ENCODE measurements at regions of chr5 and their contacts with region 1.

Region 1: GRCh38 chr5:146049014-146049703 is 56.2 kb downstream of the PLAC8L1 start:
- DNase-seq: peak in 1 of 2 donors; percentile 67
- H3K4me3 ChIP-seq: no peak overlapping the region
- H3K27ac ChIP-seq: no peak overlapping the region
- H3K4me1 ChIP-seq: no peaks in the 10 kb centered on the region
- H3K27me3 ChIP-seq: no peaks in the 10 kb centered on the region
- CTCF ChIP-seq: peak; percentile 40 to 76 (median 67)

Region 2: GRCh38 chr5:144203750-144204596 is 1845.2 kb before region 1 on chr5:
- intact Hi-C with region 1: loop called (anchors 10 kb)
- DNase-seq: peak in 1 of 2 donors; percentile 64
- H3K4me3 ChIP-seq: no peak overlapping the region
- H3K27ac ChIP-seq: no peak overlapping the region
- H3K4me1 ChIP-seq: peaks cover 0 to 4% of the 10 kb centered on the region in 2 donors
- H3K27me3 ChIP-seq: no peaks in the 10 kb centered on the region
- CTCF ChIP-seq: peak; percentile 64 to 83 (median 77)

Region 3: DNA sequence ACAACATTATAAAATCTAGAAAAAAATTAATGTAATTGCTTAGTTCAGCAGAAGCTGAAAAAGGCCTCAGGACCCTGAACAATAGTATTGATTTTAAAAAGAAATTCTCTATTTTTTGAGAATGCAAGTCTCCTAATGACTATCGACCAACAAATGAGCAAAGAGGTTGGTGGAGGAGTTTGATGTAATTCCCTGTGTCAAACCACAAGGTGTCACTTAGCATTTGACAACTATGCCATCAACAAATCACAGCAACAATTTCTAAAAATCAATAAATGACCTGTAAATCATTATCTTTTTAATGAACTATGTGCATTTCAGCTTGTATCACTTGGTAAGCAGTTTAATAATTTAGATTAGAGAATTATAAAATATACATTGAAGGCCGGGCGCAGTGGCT is 347.8 kb before region 1 on chr5:
- intact Hi-C with region 1: loop called (anchors 10 kb)
- DNase-seq: no peak
- H3K4me3 ChIP-seq: no peak overlapping the region
- H3K27ac ChIP-seq: no peak overlapping the region
- H3K4me1 ChIP-seq: no peaks in the 10 kb centered on the region
- H3K27me3 ChIP-seq: no peaks in the 10 kb centered on the region
- CTCF ChIP-seq: no peak

Region 4: DNA sequence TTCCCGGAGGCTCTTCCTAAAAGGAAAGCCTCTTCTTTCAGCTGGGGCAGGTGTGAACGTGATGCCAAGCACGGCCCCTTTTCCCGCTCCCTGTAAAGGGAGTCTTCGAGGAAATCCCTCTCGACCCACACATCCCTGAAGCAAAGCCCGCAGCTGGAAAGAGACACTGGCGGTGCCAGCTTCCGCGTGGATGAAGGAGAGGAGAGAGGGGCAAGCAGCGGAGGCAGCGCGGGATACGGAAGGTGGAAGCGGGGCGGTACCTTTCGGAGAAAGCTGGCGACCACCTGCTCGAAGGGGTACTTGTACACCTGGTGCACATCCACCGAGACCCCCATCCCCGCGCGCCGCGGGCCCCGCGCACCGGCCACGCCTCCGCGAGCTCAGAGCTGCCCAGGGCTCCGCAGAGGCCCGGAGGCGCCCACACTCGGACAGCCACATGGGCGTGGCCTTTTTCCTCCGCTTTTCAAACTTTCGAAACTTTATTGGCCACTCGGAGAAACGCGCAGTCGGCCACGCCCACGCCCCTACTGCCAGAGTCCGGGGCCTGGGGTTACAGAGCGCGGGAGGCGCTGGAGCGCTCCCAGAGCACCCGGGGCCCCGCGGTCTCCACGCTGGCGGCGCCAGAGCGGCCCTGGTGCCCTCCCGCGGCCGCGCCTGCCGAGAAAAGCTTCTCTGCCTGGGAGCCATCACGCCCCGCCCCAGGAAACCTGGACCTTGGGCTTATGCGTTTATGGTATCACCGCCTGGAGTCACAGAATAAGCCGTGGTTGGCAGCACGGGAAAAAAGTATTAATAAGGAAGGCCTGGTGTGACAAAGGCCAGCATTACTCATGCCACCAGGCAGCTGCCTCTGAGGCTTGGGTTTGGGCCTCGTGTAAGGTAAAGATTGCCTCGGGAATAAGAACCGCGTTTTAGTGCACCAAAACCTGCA is 214.0 kb before region 1 on chr5 and contains the start of gene PRELID2:
- intact Hi-C with region 1: loop called (anchors 5 kb)
- DNase-seq: peak; percentile 56 to 93
- H3K4me3 ChIP-seq: peak within 1 kb of the TSS; percentile 77
- H3K27ac ChIP-seq: peak within 1 kb of the TSS; percentile 82 to 90
- H3K4me1 ChIP-seq: peaks cover 0 to 18% of the 10 kb centered on the region in 2 donors
- H3K27me3 ChIP-seq: no peaks in the 10 kb centered on the region
- CTCF ChIP-seq: no peak
- total RNA-seq, gene PRELID2: 23.5 TPM

Region 5: DNA sequence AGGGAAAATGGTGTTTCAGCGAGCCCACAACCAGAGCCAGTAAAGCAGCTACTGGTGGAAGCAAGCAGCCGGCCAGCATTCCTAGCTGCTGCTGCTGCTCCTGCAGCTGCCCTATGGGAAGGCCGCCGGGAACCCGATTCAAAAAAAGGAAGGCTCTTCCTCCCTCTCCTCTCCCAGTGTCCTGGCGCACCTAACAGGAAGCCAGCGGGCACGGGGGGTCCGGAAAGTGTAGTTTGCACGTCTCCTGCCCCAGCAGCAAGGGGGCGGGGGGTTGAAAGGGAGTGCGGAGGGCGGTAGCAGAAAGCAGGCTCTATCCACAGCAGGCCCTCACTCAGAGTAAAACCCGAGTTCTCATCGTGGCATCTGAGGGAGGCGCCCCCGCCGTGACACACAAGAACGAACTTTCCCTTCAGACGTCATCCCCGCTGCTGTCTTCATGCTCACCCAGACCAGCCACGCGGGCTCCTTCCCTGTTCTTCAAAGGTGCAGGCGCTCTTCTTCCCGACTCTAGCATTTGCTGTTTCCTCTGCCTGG is 192.8 kb before region 1 on chr5:
- intact Hi-C with region 1: loop called (anchors 5 kb)
- DNase-seq: peak in 1 of 2 donors; percentile 72
- H3K4me3 ChIP-seq: peak overlapping the region; percentile 60 to 62
- H3K27ac ChIP-seq: peak overlapping the region in 1 of 2 donors; percentile 14
- H3K4me1 ChIP-seq: peaks cover 2 to 4% of the 10 kb centered on the region in 2 donors
- H3K27me3 ChIP-seq: no peaks in the 10 kb centered on the region
- CTCF ChIP-seq: no peak

Region 6: DNA sequence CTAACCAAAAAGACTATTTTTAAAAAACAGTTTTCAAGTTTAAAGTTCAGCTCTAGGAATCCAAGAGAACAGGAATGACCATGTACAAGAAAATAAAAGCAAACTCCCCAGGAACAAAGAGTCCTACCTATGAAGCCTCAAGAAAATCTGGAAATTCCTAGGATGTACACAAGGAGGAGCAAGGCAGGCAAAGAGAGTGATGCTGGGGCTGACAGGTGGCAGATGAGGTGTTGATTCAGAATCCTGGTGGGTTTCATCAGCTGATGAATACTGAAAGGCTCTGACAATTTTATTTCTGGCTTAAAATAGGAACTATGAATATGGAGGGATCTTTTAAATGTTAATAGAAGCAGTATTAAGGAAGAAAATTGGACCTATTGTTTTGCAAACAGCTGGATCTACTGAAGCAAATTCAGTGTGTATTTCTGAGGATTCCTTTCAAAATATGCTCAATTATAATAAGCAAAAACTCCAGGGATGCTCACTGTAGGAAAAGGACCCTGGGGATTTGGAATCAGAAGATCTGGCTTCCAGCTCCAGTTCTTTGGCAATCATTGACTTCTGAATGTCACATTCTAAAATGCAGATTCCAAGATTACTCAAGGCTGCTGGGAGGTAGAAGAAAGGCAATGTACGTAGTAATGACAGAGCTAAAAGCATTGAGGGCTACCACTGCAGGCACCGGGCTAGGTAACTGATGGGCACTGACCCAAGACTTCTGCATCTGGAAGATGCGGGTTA is 140.8 kb before region 1 on chr5:
- intact Hi-C with region 1: loop called (anchors 5 kb)
- DNase-seq: no peak
- H3K4me3 ChIP-seq: no peak overlapping the region
- H3K27ac ChIP-seq: no peak overlapping the region
- H3K4me1 ChIP-seq: no peaks in the 10 kb centered on the region
- H3K27me3 ChIP-seq: no peaks in the 10 kb centered on the region
- CTCF ChIP-seq: no peak

Measured in ascending aorta (tissue), 2 donors.